ENCODE measurements at regions of chr1 and their contacts with region 1.

Region 1: DNA sequence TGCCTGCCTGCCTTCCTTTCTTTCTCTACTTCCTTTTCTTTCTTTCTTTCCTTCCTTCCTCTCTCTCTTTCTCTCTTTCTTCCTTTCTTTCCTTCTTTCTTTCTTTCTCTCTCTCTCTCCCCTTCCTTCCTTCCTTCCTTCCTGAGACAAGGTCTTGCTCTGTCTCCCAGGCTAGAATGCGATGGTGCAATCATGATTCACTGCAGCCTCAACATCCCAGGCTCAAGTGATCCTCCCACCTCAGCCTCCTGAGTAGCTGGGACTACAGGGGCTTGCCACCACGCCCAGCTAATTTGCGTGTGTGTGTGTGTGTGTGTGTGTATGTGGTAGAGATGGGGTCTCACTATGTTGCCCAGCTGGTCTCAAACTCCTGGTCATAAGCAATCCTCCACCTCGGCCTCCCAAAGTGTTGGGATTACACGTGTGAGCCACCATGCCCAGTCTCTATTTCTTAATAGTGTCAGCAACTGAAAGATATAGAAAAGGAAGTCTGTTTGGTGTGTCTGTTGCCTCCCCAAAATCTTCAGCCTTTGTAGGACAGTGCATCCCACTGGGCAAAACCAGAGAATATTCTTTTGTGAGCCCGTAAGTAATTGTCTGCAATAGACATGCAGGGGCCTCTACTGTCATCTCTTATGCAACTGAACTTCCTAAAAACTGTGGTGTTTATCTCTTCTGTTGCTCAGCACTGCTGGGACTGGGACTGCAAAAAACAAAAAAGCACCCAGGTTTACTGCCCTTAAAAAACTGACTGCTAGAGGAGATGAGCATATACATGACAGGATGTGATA is 20.9 kb upstream of the RAB4A start:
- DNase-seq: no peak
- ATAC-seq: no peak
- H3K4me3 ChIP-seq: no peak overlapping the region
- H3K27ac ChIP-seq: no peak overlapping the region
- H3K4me1 ChIP-seq: no peaks in the 10 kb centered on the region
- H3K27me3 ChIP-seq: peaks cover 11% of the 10 kb centered on the region; the same call in 1 of the 2 replicates
- CTCF ChIP-seq: no peak
- POLR2A ChIP-seq: no peak
- RAD21 ChIP-seq: no peak

Region 2: GRCh38 chr1:228860911-228861831 is 388.9 kb before region 1 on chr1:
- CTCF ChIA-PET with region 1: no interaction called
- POLR2A ChIA-PET with region 1: no interaction called
- dilution Hi-C with region 1: no loop called
- in situ Hi-C with region 1: no loop called
- intact Hi-C with region 1: no loop called
- DNase-seq: peak; percentile 87
- ATAC-seq: peak; percentile 96
- H3K4me3 ChIP-seq: no peak overlapping the region
- H3K27ac ChIP-seq: no peak overlapping the region
- H3K4me1 ChIP-seq: peaks cover 16% of the 10 kb centered on the region; the same call in 1 of the 2 replicates
- H3K27me3 ChIP-seq: no peaks in the 10 kb centered on the region
- CTCF ChIP-seq: no peak
- POLR2A ChIP-seq: no peak
- RAD21 ChIP-seq: no peak; the same call in 1 of the 2 replicates

Region 3: GRCh38 chr1:229296541-229296941 is 46.5 kb after region 1 on chr1:
- CTCF ChIA-PET with region 1: no interaction called
- POLR2A ChIA-PET with region 1: no interaction called
- dilution Hi-C with region 1: no loop called
- in situ Hi-C with region 1: no loop called
- intact Hi-C with region 1: no loop called
- DNase-seq: peak; percentile 87
- ATAC-seq: peak; percentile 83
- H3K4me3 ChIP-seq: no peak overlapping the region
- H3K27ac ChIP-seq: peak overlapping the region; percentile 48
- H3K4me1 ChIP-seq: peaks cover 19% of the 10 kb centered on the region
- H3K27me3 ChIP-seq: no peaks in the 10 kb centered on the region
- CTCF ChIP-seq: no peak
- POLR2A ChIP-seq: no peak
- RAD21 ChIP-seq: no peak

Region 4: GRCh38 chr1:229352975-229353374 is 102.9 kb after region 1 on chr1:
- CTCF ChIA-PET with region 1: no interaction called
- POLR2A ChIA-PET with region 1: no interaction called
- dilution Hi-C with region 1: no loop called
- in situ Hi-C with region 1: no loop called
- intact Hi-C with region 1: no loop called
- DNase-seq: no peak
- ATAC-seq: no peak
- H3K4me3 ChIP-seq: no peak overlapping the region
- H3K27ac ChIP-seq: no peak overlapping the region
- H3K4me1 ChIP-seq: no peaks in the 10 kb centered on the region
- H3K27me3 ChIP-seq: peaks cover 6% of the 10 kb centered on the region
- CTCF ChIP-seq: no peak
- POLR2A ChIP-seq: no peak
- RAD21 ChIP-seq: no peak

Region 5: GRCh38 chr1:229694053-229694693 is 444.1 kb after region 1 on chr1:
- CTCF ChIA-PET with region 1: no interaction called
- POLR2A ChIA-PET with region 1: no interaction called
- dilution Hi-C with region 1: no loop called
- in situ Hi-C with region 1: no loop called
- intact Hi-C with region 1: loop called (anchors 5 kb)
- DNase-seq: peak; percentile 81
- ATAC-seq: peak; percentile 93
- H3K4me3 ChIP-seq: no peak overlapping the region
- H3K27ac ChIP-seq: no peak overlapping the region
- H3K4me1 ChIP-seq: peaks cover 5% of the 10 kb centered on the region; the same call in 1 of the 2 replicates
- H3K27me3 ChIP-seq: no peaks in the 10 kb centered on the region
- CTCF ChIP-seq: no peak
- POLR2A ChIP-seq: no peak
- RAD21 ChIP-seq: no peak

Measured in IMR-90 (cell line).